Activated CD4-positive, alpha-beta T cell treated with anti-CD3 and anti-CD28 coated beads, Interleukin-2, amount 10 ng/mL, durations not matched to agents 7 days and 5 days (primary cell): ENCODE measurements at regions of chr1 and their contacts with region 1.

Region 1: DNA sequence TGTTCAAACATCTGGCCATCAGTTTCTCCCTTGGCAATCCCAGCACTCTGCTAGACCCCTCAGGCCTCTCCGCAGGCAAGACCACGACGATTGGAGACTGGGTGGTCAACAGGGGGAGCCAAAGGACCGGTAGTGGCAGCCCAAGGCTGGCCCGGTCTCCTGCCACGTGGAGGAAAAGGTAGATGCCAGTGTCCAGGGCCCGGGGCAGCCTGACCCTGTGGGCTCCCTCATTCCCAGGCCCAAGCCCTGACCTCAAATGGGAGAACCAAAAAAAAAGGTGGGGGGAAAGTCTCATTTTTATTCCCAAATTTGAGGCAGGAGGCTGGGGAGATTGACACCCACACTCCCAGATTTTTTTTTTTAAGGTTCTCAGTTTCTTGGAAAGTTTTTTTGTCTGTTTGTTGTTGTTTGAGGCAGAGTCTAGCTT is 24.8 kb downstream of the S100A6 start:
- DNase-seq: peak; percentile 84
- H3K4me3 Mint-ChIP-seq: no peak overlapping the region
- H3K27ac Mint-ChIP-seq: peak overlapping the region; percentile 38
- H3K4me1 Mint-ChIP-seq: peaks cover 36% of the 10 kb centered on the region
- H3K27me3 Mint-ChIP-seq: no peaks in the 10 kb centered on the region

Region 2: DNA sequence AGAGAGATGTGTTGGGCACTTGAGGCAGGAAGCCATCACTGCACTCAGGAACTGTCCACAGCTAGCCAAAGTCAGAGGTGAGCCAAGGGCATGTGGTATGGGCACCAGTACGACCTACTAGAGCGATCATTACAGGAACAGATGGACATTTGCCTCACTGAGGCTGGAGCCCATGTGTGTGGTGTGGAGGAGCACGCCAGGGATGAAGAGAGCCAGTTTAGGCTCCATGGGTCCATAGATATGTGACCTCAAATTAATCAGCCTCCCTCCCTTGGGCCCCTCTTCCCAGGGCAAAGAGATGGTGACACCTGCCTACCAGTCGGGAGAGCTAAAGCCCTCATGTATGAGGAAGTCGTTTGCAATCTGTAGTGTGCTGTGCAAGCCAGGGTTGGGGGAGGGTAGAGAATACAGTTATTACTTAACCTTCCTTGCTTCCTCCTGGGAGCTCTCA is 166.4 kb before region 1 on chr1:
- CTCF ChIA-PET with region 1: no interaction called
- POLR2A ChIA-PET with region 1: no interaction called
- DNase-seq: no peak
- H3K4me3 Mint-ChIP-seq: no peak overlapping the region
- H3K27ac Mint-ChIP-seq: no peak overlapping the region
- H3K4me1 Mint-ChIP-seq: peaks cover 55% of the 10 kb centered on the region
- H3K27me3 Mint-ChIP-seq: peaks cover 26% of the 10 kb centered on the region

Region 3: DNA sequence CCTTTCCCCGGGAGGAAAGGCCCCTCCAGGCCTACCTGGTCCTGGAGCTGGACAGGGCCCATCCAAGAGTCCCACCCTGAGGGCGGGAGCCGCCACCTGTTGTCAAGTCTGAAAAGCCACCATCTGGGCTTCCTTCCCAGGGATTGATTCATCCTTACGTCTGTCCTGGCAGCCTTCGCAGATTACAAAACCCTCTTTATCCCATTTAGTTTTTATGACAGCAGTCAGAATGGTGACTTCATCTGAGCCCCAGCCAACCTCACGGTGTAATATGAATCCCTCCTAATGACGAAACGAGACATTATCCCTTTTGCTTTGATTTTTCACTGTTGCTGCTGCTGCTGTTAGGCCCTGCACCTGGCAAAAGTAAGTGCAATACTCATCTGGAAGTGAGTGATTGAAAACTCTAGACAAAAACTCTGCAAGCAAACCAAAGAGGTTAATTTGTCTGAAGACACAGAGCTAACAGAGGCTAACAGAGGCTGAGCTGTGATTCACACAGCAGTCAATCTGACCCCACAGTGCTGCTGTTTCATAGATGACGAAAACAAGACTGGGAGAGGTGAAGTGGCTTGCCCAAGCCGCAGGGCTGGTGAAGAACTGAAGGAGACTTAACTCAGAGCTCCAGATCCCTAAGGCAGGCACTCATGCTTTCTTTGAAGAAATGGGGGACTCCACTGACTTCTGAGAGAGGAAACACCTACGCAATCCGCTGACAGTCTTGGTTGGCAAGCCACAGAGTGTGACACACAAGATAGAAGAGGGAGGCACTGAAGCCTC is 20.5 kb before region 1 on chr1:
- CTCF ChIA-PET with region 1: no interaction called
- POLR2A ChIA-PET with region 1: no interaction called
- DNase-seq: no peak
- H3K4me3 Mint-ChIP-seq: no peak overlapping the region
- H3K27ac Mint-ChIP-seq: no peak overlapping the region
- H3K4me1 Mint-ChIP-seq: no peaks in the 10 kb centered on the region
- H3K27me3 Mint-ChIP-seq: peaks cover 15% of the 10 kb centered on the region

Region 4: GRCh38 chr1:153525088-153525728 is 14.2 kb after region 1 on chr1:
- CTCF ChIA-PET with region 1: interaction called, 15 read pairs
- POLR2A ChIA-PET with region 1: no interaction called
- DNase-seq: no peak
- H3K4me3 Mint-ChIP-seq: no peak overlapping the region
- H3K27ac Mint-ChIP-seq: peak overlapping the region; percentile 19
- H3K4me1 Mint-ChIP-seq: peaks cover 11% of the 10 kb centered on the region
- H3K27me3 Mint-ChIP-seq: no peaks in the 10 kb centered on the region

Region 5: DNA sequence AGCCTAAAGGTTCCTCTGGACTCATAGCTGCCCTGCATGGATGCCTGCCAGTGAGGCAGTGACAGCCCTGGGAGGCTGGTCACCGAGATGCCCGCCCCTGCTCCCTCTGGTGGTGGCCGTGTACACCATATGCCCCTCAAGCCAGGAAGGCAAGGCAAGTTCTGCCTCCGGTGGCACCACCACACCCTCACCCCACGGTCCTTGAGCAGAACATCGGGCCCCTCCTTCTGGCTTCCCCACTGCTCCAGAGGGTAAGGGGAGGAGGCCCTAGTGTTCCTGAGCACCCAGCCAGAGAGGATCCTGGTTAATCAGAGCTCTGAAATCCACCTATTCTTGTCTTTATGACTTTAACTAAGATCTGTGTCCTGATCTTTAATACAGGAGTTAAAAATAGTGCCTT is 106.7 kb after region 1 on chr1:
- CTCF ChIA-PET with region 1: interaction called, 10 read pairs
- POLR2A ChIA-PET with region 1: no interaction called
- DNase-seq: peak; percentile 85
- H3K4me3 Mint-ChIP-seq: no peak overlapping the region
- H3K27ac Mint-ChIP-seq: peak overlapping the region; percentile 68
- H3K4me1 Mint-ChIP-seq: peaks cover 7% of the 10 kb centered on the region
- H3K27me3 Mint-ChIP-seq: no peaks in the 10 kb centered on the region